HCT116 (cell line): ENCODE measurements at regions of chr3 and their contacts with region 1.

Region 1: GRCh38 chr3:106824856-106825255 is 552.4 kb upstream of the CCDC54 start:
- DNase-seq: peak; percentile 12
- ATAC-seq: peak; percentile 84
- H3K4me3 ChIP-seq: no peak overlapping the region
- H3K27ac ChIP-seq: no peak overlapping the region
- H3K4me1 ChIP-seq: no peaks in the 10 kb centered on the region
- H3K27me3 ChIP-seq: no peaks in the 10 kb centered on the region
- CTCF ChIP-seq: peak; percentile 34 to 50 (median 50); a peak in 5 of 6 replicates
- POLR2A ChIP-seq: no peak
- RAD21 ChIP-seq: peak; percentile 51

Region 2: DNA sequence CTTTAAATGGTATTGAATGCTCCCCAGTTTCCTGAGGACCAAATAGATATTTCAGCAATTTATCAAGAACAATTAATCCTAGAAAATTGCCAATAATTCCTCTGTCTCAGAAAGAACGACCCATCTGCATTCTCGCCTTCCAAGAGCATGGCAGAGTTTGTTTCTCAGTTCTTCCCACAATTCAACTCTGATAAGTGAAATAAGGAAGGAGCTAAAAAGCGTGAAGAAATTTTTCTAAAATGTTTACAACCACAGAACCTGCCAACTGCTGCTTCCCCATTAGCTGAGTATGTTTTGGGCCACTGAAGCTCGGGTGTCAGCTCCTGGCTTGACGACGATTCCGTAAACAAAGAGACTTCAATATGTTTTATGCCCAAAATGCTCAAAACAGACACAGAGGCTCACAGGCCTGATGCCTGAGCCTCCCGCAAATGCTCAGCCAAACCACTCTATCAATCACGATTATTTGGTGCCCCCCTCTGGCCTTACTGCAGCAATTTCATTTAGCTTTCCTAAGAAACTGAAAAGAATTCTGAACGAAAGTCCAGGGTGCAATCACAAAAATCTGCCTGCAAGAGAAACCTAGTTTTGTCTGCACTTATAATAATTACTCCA is 293.2 kb after region 1 on chr3:
- CTCF ChIA-PET with region 1: interaction called, 3 read pairs
- POLR2A ChIA-PET with region 1: no interaction called
- RAD21 ChIA-PET with region 1: no interaction called
- intact Hi-C with region 1: loop called (anchors 1 kb)
- DNase-seq: peak; percentile 59
- ATAC-seq: peak; percentile 88
- H3K4me3 ChIP-seq: no peak overlapping the region
- H3K27ac ChIP-seq: no peak overlapping the region
- H3K4me1 ChIP-seq: peaks cover 0 to 4% of the 10 kb centered on the region in 2 experiments; a peak in 1 of 4 replicates
- H3K27me3 ChIP-seq: no peaks in the 10 kb centered on the region
- CTCF ChIP-seq: peak; percentile 46 to 80 (median 60); a peak in 5 of 6 replicates
- POLR2A ChIP-seq: no peak
- RAD21 ChIP-seq: peak; percentile 80

Region 3: DNA sequence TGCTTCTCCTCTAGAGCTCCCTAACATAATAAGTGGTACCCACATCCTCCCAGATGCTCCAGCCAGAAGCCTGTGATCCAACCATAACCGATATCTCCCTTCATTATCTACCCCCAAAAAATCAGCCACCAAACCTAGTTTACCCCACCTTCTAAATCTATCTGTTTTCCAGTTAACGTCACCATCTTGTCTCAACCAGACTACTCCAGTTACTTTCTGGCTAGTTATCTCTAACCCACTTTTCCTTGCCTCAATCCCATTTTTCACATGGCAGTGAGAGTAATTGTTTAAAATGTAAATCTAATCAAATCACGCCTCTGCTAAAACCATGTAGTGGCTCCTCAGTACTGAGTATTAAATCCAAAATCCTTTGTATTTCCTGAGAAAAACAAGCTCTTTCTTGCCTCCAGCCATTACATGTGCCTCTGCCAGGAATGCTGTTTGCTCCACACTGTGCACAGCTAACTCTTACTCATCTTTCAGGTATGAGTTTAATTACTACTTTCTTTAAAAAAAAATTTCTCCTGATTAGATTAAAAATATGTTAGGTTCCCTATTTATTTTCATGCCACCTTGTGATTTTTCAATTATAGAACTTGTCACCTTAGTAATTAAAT is 567.8 kb after region 1 on chr3:
- CTCF ChIA-PET with region 1: no interaction called
- POLR2A ChIA-PET with region 1: no interaction called
- RAD21 ChIA-PET with region 1: no interaction called
- intact Hi-C with region 1: no loop called
- DNase-seq: no peak
- ATAC-seq: peak; percentile 64; the same call in 1 of the 2 replicates
- H3K4me3 ChIP-seq: no peak overlapping the region
- H3K27ac ChIP-seq: no peak overlapping the region
- H3K4me1 ChIP-seq: peaks cover 4 to 10% of the 10 kb centered on the region in 2 experiments; a peak in 3 of 4 replicates
- H3K27me3 ChIP-seq: no peaks in the 10 kb centered on the region
- CTCF ChIP-seq: no peak
- POLR2A ChIP-seq: no peak
- RAD21 ChIP-seq: no peak